Panc1 (cell line): ENCODE measurements at regions of chr17 and their contacts with region 1.

Region 1: DNA sequence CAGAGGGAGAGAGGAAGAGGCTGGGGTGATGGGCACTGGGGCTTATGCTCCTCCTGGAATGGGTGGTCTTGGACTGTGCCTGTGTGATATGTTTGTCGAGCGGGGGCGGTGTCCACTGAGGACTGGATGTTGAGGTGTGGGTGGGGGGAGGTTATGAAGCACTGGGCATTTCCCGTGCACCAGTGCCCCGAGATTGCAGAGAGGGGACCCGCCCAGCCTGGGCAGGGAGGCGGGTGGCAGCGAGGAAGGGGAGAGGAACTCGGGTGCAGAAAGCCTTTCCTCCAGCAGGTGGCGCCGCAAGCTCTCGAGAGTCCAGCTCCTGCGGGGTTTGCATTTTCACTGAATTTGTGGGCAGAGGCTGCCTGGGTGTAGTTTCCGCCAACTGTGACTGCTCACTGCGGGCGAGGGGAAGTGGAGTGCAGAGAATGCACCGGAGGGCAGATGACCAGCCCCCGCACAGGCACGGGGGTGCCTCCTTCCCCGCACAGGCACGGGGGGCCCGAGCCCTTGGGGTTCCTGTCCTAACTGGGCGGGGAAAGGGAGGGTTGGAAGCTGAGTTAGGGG is 190.6 kb downstream of the SEC14L1 start:
- DNase-seq: no peak
- ATAC-seq: peak; percentile 78
- H3K4me3 ChIP-seq: no peak overlapping the region
- H3K27ac ChIP-seq: peak overlapping the region; percentile 65
- H3K4me1 ChIP-seq: peaks cover 73% of the 10 kb centered on the region
- H3K27me3 ChIP-seq: no peaks in the 10 kb centered on the region
- CTCF ChIP-seq: peak; percentile 97

Region 2: GRCh38 chr17:77354420-77355241 is 23.2 kb after region 1 on chr17:
- CTCF ChIA-PET with region 1: interaction called, 11 read pairs
- POLR2A ChIA-PET with region 1: interaction called, 7 read pairs
- in situ Hi-C with region 1: no loop called
- intact Hi-C with region 1: no loop called
- DNase-seq: no peak
- ATAC-seq: peak; percentile 56
- H3K4me3 ChIP-seq: 0 out of 4 replicates have a peak overlapping the region, but pooled peaks of 1 of the 2 experiments have one; percentile 5
- H3K27ac ChIP-seq: peak overlapping the region; percentile 93
- H3K4me1 ChIP-seq: peaks cover 74% of the 10 kb centered on the region
- H3K27me3 ChIP-seq: no peaks in the 10 kb centered on the region
- CTCF ChIP-seq: no peak

Region 3: GRCh38 chr17:77391668-77392375 is 60.4 kb after region 1 on chr17:
- CTCF ChIA-PET with region 1: interaction called, 4 read pairs
- POLR2A ChIA-PET with region 1: no interaction called
- in situ Hi-C with region 1: no loop called
- intact Hi-C with region 1: loop called (anchors 10 kb)
- DNase-seq: peak; percentile 54
- ATAC-seq: peak; percentile 62
- H3K4me3 ChIP-seq: peak overlapping the region in 1 of 2 experiments; percentile 11; a peak in 2 of 4 replicates
- H3K27ac ChIP-seq: peak overlapping the region; percentile 91
- H3K4me1 ChIP-seq: peaks cover 82% of the 10 kb centered on the region
- H3K27me3 ChIP-seq: no peaks in the 10 kb centered on the region
- CTCF ChIP-seq: no peak

Region 4: GRCh38 chr17:77429919-77430752 is 98.8 kb after region 1 on chr17:
- CTCF ChIA-PET with region 1: interaction called, 4 read pairs
- POLR2A ChIA-PET with region 1: no interaction called
- in situ Hi-C with region 1: no loop called
- intact Hi-C with region 1: loop called (anchors 5 kb)
- DNase-seq: no peak
- ATAC-seq: peak; percentile 59
- H3K4me3 ChIP-seq: no peak overlapping the region
- H3K27ac ChIP-seq: peak overlapping the region; percentile 72
- H3K4me1 ChIP-seq: peaks cover 72% of the 10 kb centered on the region
- H3K27me3 ChIP-seq: no peaks in the 10 kb centered on the region
- CTCF ChIP-seq: peak; percentile 93; the same call in 1 of the 2 replicates

Region 5: DNA sequence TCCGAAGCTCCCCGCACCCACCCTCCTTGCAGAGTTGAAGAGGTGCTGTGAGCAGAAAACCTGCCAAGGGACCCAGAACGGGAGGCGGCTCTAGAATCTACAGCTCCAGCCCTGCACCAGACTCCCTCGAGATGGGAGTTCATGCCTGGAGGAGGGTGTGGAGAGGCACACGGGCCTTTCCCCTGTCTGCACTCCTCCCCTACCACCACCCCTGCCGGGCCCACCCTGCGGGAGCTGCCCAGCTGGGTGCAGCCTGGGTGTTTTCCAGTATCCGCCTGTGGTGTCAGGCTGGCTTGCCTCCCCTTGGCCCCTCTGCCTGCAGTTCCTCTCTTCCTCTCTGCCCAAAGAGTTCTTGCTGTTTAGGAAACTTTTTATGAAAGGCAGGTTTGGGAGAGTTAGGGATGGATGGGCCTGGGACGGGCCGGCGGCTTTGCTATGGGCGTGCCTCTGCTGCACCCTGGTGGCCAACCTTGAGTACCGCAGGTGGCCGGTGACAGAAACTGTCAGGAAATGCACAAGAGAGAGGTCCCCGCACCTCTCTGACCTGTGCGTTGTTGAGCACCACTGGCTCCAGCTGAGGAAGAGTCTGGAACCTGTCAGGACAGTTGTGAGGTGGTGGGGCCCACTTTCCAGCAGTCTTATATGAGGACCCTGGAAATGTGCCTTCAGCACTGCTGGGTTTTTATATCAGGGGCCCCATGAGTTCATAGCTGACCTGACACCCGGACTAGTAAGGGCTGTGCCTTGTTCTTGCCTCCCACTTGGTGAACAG is 163.5 kb after region 1 on chr17:
- CTCF ChIA-PET with region 1: interaction called, 6 read pairs
- POLR2A ChIA-PET with region 1: no interaction called
- in situ Hi-C with region 1: no loop called
- intact Hi-C with region 1: loop called (anchors 2 kb)
- DNase-seq: peak; percentile 50
- ATAC-seq: peak; percentile 79
- H3K4me3 ChIP-seq: no peak overlapping the region
- H3K27ac ChIP-seq: no peak overlapping the region; the same call in 1 of the 2 replicates
- H3K4me1 ChIP-seq: peaks cover 9% of the 10 kb centered on the region
- H3K27me3 ChIP-seq: no peaks in the 10 kb centered on the region
- CTCF ChIP-seq: peak; percentile 97